Activated CD8-positive, alpha-beta T cell treated with anti-CD3 and anti-CD28 coated beads, Interleukin-2, amount 10 ng/mL, durations not matched to agents 7 days and 5 days (primary cell): ENCODE measurements at regions of chr2 and their contacts with region 1.

Region 1: DNA sequence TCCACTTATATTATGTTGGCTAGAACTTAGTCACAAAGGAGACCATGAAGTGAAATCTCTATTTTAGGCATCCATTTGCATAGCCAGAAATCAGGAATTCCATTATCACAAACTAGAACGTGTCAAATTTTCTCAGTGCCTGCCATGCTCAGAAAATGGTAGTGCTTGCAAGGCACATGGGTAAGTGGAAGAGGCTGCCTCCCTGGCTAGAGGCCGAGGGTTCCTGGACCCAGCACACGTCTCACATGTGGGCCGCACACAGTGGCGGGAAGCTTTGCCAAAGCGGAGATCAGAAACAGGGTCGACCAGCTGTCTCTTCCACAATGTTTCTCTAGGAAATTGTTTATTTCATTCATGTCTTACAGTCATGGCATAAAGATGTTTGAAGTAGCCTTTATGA is 42.3 kb downstream of the TRAF3IP1 start:
- DNase-seq: no peak
- ATAC-seq: no peak
- H3K4me3 Mint-ChIP-seq: no peak overlapping the region
- H3K27ac Mint-ChIP-seq: no peak overlapping the region
- H3K4me1 Mint-ChIP-seq: peaks cover 26% of the 10 kb centered on the region
- H3K27me3 Mint-ChIP-seq: no peaks in the 10 kb centered on the region

Region 2: GRCh38 chr2:238382381-238382781 is 19.8 kb after region 1 on chr2:
- CTCF ChIA-PET with region 1: no interaction called
- POLR2A ChIA-PET with region 1: no interaction called
- DNase-seq: no peak
- ATAC-seq: no peak
- H3K4me3 Mint-ChIP-seq: no peak overlapping the region
- H3K27ac Mint-ChIP-seq: no peak overlapping the region
- H3K4me1 Mint-ChIP-seq: peaks cover 61% of the 10 kb centered on the region
- H3K27me3 Mint-ChIP-seq: no peaks in the 10 kb centered on the region

Region 3: DNA sequence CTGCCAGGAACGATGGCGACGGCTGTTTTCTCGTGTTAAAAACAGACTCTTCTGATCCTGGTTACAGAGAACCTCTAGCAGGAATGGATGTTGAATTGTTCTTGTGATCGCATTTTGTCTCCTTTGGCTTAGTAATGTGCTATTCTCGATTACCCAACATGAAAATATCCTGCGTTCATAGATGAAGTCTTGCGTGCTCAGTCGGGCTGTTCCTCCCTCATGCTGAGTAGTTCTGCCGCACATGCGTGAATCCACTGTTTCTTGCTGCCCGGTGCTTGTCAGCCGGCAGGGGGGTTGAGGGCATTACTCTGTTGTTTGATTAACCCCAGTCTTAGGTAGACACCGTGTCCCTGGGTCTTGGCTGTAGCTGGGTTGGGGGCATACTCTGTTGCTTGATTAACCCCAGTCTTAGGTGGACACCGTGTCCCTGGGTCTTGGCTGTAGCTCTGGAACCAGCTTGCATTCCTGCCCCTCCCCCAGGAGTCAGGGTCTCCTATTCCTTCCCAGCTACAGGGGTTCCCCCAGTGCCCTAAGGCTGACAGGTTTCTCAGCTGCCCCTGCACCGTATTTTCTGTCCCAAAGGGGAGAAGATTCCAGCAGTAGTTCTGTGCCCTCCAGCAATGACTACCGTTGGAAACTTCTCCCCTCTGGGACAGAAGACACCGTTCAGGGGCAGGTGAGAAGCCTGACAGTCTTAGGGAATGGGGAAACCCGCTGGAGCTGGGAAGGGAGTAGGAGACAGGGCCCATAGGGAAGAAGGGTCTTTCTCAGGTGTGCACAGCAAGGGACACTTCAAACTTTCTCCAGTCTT is 42.0 kb after region 1 on chr2:
- CTCF ChIA-PET with region 1: no interaction called
- POLR2A ChIA-PET with region 1: no interaction called
- DNase-seq: no peak
- ATAC-seq: no peak
- H3K4me3 Mint-ChIP-seq: no peak overlapping the region
- H3K27ac Mint-ChIP-seq: no peak overlapping the region
- H3K4me1 Mint-ChIP-seq: peaks cover 9% of the 10 kb centered on the region
- H3K27me3 Mint-ChIP-seq: no peaks in the 10 kb centered on the region

Region 4: GRCh38 chr2:238459081-238459629 is 96.5 kb after region 1 on chr2:
- CTCF ChIA-PET with region 1: interaction called, 10 read pairs
- POLR2A ChIA-PET with region 1: no interaction called
- DNase-seq: peak; percentile 16
- ATAC-seq: no peak
- H3K4me3 Mint-ChIP-seq: no peak overlapping the region
- H3K27ac Mint-ChIP-seq: no peak overlapping the region
- H3K4me1 Mint-ChIP-seq: peaks cover 3% of the 10 kb centered on the region
- H3K27me3 Mint-ChIP-seq: peaks cover 7% of the 10 kb centered on the region